GM10248 (cell line): ENCODE measurements at regions of chr3 and their contacts with region 1.

Region 1: GRCh38 chr3:195133462-195133861 is 137.5 kb downstream of the XXYLT1 start:
- DNase-seq: peak; percentile 45
- CTCF ChIP-seq: no peak

Region 2: GRCh38 chr3:195147649-195148095 is 14.2 kb after region 1 on chr3:
- CTCF ChIA-PET with region 1: interaction called, 11 read pairs
- POLR2A ChIA-PET with region 1: interaction called, 9 read pairs
- DNase-seq: peak; percentile 81
- CTCF ChIP-seq: no peak